HAP-1 (cell line): ENCODE measurements at regions of chr12 and their contacts with region 1.

Region 1: DNA sequence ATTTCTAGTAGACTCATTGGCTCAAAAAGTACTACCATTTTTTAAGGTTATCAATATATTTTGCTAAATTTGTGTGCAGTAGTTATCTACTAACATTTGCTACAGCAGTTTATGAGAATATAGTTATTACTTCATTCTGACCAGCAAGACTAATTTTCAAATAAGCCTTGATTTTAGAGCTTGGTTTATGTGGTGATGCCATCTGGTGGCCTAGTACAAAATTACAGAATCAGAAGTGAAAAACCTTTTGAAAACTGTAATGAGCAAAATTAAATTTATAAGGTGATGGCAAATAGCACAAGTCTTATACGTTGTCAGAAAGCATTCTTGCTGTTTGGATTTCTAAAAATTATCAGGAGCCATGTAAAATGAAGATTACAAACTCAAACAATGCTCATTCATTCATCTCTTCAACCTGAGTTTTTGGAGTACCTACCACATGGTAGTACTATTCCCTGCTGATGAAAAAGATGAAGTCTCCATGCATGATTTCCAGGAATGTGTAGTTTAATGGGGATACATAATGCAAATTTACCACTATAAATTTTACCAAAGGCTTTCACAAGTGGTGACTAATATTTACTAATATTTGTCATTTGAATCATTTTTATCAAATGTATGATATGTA is 51.0 kb downstream of the MAGOHB start:
- DNase-seq: peak; percentile 15 to 43
- H3K4me3 ChIP-seq: no peak overlapping the region
- H3K4me1 ChIP-seq: no peaks in the 10 kb centered on the region; the same call in 1 of the 2 replicates
- H3K27me3 ChIP-seq: peaks cover 3% of the 10 kb centered on the region

Region 2: GRCh38 chr12:9741726-9742125 is 820.7 kb before region 1 on chr12:
- in situ Hi-C with region 1: loop called (anchors 25 kb)
- DNase-seq: no peak
- H3K4me3 ChIP-seq: no peak overlapping the region
- H3K4me1 ChIP-seq: peaks cover 4% of the 10 kb centered on the region; the same call in 1 of the 2 replicates
- H3K27me3 ChIP-seq: no peaks in the 10 kb centered on the region

Region 3: DNA sequence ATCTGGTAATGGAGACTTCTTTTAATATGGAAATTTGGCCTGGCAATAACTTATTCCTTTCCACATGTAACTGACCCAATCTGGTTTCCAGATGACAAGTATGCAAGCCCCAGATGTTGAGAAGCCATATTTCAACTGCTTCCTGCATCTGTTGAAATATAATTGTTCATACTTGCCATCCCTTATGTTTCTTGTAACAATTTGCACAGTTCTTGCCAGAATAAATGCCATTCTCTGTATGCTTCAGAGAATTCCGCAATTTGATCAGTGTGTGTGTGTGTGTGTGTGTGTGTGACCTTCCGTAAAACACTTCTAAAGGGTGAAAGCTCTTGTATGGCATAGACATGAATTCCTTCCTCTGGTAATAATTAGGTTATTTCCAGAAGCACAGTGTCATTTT is 628.5 kb before region 1 on chr12:
- in situ Hi-C with region 1: no loop called
- DNase-seq: no peak
- H3K4me3 ChIP-seq: no peak overlapping the region
- H3K4me1 ChIP-seq: no peaks in the 10 kb centered on the region
- H3K27me3 ChIP-seq: no peaks in the 10 kb centered on the region

Region 4: GRCh38 chr12:10235761-10236631 is 326.4 kb before region 1 on chr12:
- in situ Hi-C with region 1: loop called (anchors 10 kb)
- DNase-seq: peak; percentile 40 to 53
- H3K4me3 ChIP-seq: no peak overlapping the region
- H3K4me1 ChIP-seq: peaks cover 1% of the 10 kb centered on the region
- H3K27me3 ChIP-seq: no peaks in the 10 kb centered on the region

Region 5: DNA sequence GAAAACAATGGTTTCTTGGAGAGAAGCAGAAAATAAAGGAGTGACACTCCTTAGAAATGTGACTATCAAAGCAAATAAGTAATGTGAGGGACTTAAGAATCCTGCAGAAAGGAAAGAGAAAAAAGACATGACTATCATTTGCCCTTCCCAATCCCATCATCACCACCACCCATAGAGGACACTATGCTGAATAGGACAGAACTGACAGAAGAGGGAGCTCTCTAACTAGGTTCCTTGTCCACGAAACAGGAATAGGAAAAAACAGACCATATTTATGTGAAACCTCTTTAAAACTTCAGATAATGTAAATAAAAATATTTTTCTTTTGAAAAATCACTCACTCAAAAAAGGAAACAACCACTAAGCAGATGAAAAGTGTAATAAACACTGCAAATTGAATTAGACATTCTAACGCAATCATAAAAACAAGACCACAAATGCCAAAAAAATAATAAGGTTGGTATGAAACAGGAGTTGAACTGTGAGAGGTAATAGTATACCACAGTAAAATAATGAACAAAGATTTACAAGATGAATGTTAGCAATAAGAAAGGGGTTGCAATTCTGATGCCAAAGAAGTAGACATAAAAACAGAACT is 230.7 kb before region 1 on chr12:
- in situ Hi-C with region 1: loop called (anchors 25 kb)
- DNase-seq: peak; percentile 12 to 45
- H3K4me3 ChIP-seq: no peak overlapping the region
- H3K4me1 ChIP-seq: no peaks in the 10 kb centered on the region
- H3K27me3 ChIP-seq: no peaks in the 10 kb centered on the region